ENCODE measurements at regions of chr4 and their contacts with region 1.

Region 1: DNA sequence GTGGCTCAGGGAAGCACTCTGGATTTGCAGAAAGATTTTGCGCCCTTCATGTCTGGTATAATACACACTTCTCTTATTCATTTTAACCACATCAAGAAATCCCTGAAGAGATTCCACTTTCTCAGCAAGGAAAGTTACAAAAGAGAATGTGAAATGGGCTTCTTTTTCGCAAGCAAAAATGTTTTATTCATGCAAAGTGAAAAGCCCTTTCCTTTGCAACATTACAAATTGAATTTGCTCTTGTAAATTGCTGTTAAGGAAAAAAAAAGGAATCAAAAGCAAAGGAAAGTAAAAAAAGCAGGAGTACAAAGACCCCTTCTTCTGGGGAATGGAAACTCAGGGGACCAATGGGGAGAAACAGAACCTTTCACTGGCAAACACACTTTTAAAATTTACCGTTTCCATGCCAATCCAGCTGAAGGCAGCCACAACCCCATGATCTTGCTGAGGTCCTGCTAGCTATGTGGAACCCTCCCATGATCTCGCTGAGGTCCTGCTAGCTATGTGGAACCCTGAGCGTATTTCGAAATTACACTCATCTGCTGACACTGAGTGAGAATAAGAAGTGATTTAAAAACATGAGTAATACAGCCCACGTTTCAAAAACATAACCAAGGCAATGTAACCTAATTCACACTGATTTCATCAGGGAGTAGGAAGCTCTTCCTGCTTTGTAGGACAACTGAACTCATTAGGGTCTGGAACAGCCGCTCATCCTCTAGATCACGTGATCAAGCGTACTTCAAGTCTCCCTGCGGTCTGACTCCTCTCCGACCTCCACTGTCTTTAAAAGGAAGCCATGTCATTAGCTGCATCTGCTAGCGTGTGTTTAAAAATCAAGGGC is 137.8 kb downstream of the NSUN7 start:
- DNase-seq: peak; percentile 61
- H3K4me3 ChIP-seq: no peak overlapping the region
- H3K27ac ChIP-seq: peak overlapping the region; percentile 72
- H3K27me3 ChIP-seq: no peaks in the 10 kb centered on the region
- CTCF ChIP-seq: no peak

Region 2: DNA sequence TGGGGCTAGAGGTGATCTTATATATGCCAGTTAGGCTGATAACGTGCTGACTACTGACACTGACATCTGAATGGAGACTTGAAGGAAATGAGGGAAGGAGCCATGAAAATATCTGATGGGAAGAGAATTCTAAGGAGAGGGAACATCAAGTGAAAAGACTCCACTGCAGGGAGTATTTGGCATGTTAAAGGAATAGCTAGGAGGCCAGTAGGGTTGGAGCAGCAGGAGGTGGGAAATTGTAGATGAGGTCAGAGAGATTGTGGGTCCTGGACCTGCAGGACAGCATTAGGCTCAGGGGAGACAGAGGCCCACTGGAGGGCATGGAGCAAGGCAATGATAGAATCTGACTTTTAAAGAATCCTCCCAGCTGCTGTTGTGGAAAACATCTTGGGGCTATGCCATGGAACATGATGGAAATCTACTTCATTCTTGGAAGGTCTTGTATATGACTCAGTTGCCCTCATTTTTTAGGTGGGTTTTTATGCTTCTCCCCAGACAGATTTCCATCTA is 193.5 kb before region 1 on chr4:
- CTCF ChIA-PET with region 1: no interaction called
- POLR2A ChIA-PET with region 1: no interaction called
- DNase-seq: no peak
- H3K4me3 ChIP-seq: no peak overlapping the region
- H3K27ac ChIP-seq: no peak overlapping the region
- H3K27me3 ChIP-seq: peaks cover 13% of the 10 kb centered on the region
- CTCF ChIP-seq: no peak

Region 3: GRCh38 chr4:40908702-40909362 is 21.3 kb after region 1 on chr4:
- CTCF ChIA-PET with region 1: interaction called, 12 read pairs
- POLR2A ChIA-PET with region 1: no interaction called
- DNase-seq: peak; percentile 44
- H3K4me3 ChIP-seq: no peak overlapping the region
- H3K27ac ChIP-seq: peak overlapping the region; percentile 54
- H3K27me3 ChIP-seq: no peaks in the 10 kb centered on the region
- CTCF ChIP-seq: peak; percentile 91

Measured in AG04450 (cell line).